AG04449 (cell line): ENCODE measurements at regions of chr14 and their contacts with region 1.

Region 1: GRCh38 chr14:37709419-37710195 is 114.2 kb downstream of the TTC6 start:
- DNase-seq: no peak
- H3K4me3 ChIP-seq: no peak overlapping the region
- CTCF ChIP-seq: peak; percentile 42

Region 2: GRCh38 chr14:37329189-37330001 is 380.2 kb before region 1 on chr14:
- CTCF ChIA-PET with region 1: no interaction called
- POLR2A ChIA-PET with region 1: no interaction called
- DNase-seq: no peak
- H3K4me3 ChIP-seq: no peak overlapping the region
- CTCF ChIP-seq: no peak

Region 3: GRCh38 chr14:37698840-37699777 is 10.5 kb before region 1 on chr14:
- CTCF ChIA-PET with region 1: interaction called, 13 read pairs
- POLR2A ChIA-PET with region 1: no interaction called
- DNase-seq: no peak
- H3K4me3 ChIP-seq: no peak overlapping the region
- CTCF ChIP-seq: no peak

Region 4: DNA sequence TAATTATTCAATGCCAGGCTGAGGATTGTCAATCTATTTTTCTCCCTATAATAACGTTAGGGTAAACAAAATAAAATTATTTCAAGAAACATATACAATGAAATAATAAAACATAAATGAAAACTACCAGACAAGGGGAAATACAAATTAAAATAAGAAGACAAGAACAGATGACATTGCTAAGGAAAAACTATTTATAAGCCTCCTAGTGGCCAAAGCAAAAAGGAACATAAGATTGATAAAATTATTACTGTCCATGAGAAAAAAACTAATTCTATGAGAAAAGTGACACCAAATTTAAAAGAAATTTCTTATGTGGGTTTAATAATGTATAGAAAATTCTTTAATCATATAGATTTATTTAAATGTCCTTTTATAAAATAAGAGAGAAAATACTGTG is 180.5 kb after region 1 on chr14:
- CTCF ChIA-PET with region 1: interaction called, 10 read pairs
- POLR2A ChIA-PET with region 1: no interaction called
- DNase-seq: no peak
- H3K4me3 ChIP-seq: no peak overlapping the region
- CTCF ChIP-seq: peak; percentile 9